PC-9 (cell line): ENCODE measurements at regions of chr3 and their contacts with region 1.

Region 1: DNA sequence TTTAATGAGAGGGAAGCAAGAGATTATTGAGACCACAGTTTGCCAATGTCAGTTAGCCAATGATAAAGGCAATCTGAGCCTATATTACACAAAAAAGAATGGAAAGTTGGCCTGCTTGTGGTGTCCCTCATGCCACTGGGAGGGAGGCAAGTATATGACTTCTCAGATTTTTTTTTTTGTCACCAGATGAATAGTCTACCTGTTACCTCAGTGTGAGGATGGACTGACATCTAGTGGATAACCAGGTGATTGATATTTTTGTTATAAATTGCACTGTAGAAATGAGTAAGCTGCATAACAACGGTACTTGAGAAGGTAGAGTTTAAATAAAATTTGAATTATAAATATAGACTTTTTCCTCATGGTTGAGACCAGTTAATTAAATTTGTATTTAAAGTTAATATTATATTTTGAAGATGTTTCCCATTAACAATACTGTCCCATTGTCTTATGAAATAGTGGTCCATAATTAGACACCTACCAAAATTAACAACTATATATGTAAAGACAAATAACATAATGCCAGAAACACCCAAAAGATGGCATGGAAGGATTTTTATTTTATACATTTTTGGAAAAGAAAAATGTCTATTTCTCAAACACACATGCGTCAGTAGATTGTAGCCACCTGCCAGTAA is 237.8 kb upstream of the GADL1 start:
- DNase-seq: peak in 1 of 2 experiments; percentile 36
- H3K4me3 ChIP-seq: no peak overlapping the region
- H3K27ac ChIP-seq: no peak overlapping the region
- H3K4me1 ChIP-seq: no peaks in the 10 kb centered on the region
- H3K27me3 ChIP-seq: no peaks in the 10 kb centered on the region
- CTCF ChIP-seq: peak; percentile 66

Region 2: DNA sequence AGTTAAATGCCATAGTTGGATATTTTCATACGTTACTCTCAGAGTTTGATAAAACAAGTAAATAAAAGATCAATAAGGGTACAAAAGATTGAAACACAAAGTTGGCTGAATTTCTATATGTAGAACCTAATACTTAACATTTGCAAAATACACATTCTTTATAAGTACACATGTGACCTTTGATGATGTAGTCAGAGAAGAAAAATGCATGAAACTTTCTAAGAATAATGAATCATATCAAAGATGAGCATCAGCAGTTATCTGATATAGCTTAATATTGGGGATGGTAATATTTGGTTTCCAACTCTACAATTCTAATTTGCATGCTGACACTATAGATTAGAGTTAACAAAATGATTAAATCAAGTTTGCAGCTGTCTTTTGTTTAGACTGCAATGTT is 713.8 kb before region 1 on chr3:
- CTCF ChIA-PET with region 1: no interaction called
- POLR2A ChIA-PET with region 1: no interaction called
- intact Hi-C with region 1: no loop called
- DNase-seq: no peak
- H3K4me3 ChIP-seq: no peak overlapping the region
- H3K27ac ChIP-seq: no peak overlapping the region
- H3K4me1 ChIP-seq: no peaks in the 10 kb centered on the region
- H3K27me3 ChIP-seq: no peaks in the 10 kb centered on the region
- CTCF ChIP-seq: no peak

Region 3: DNA sequence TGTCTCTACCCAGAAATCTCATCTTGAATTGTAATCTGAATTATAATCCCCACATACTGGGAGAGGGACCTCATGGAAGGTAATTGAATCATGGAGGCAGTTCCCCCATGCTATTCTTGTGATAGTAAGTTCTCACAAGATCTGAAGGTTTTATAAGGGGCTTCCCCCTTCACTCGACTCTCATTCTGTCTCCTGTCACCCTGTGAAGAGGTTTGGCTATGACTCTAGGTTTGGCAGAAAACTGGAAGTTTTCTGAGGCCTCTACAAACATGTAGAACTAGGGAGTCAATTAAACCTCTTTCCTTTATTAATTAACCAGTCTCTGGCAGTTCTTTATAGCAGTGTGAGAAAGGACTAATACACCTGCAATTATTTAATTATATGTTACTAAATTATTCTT is 651.0 kb before region 1 on chr3:
- CTCF ChIA-PET with region 1: no interaction called
- POLR2A ChIA-PET with region 1: no interaction called
- intact Hi-C with region 1: no loop called
- DNase-seq: no peak
- H3K4me3 ChIP-seq: no peak overlapping the region
- H3K27ac ChIP-seq: no peak overlapping the region
- H3K4me1 ChIP-seq: peaks cover 9% of the 10 kb centered on the region; the same call in 1 of the 2 replicates
- H3K27me3 ChIP-seq: no peaks in the 10 kb centered on the region
- CTCF ChIP-seq: no peak

Region 4: DNA sequence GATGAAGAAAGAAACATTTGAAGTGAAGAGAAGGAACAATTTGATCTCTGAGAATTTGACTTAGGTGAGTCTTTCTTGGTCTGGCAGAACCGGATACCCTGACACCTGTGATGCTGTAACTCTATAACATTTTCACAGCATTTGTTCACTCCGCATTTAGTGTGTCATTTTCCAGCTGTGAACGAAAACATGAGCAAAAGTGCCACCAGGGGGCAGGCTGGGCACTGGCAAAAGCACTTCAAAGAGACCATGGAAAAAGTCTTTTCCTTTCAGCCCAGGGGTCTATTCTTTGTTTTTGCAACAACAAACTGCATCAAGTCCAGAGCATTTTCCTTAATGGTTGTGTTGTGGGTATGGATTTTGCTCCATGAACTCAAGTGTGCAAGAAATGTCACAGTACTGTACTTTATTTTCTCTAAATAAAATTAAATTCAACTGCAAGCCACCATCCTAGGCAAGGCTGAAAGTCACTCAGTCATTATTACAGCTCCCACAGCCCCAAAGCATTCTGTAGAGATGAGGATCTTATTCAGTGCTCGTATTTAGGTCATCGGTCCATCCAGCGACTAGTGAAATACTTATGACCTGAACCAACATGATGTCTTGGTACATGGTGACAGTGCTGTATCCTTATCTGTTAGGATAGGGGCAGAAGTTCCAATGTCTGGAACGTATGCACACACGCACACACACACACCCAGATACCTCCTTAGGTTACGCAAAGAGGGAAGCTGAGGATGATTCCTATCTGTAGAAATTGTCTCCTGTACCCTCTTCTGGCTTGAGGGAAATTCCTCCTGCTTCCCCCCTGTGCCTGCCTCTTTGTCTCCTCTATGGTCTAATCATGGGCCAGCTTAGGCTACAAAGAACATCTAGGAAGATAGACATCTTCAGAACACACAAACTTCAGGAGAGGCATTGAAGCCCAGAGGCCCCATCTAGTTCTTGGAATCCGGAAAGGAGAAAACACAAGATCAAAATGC is 363.3 kb before region 1 on chr3:
- CTCF ChIA-PET with region 1: no interaction called
- POLR2A ChIA-PET with region 1: interaction called, 6 read pairs
- intact Hi-C with region 1: loop called (anchors 1 kb)
- DNase-seq: peak in 1 of 2 experiments; percentile 61
- H3K4me3 ChIP-seq: no peak overlapping the region
- H3K27ac ChIP-seq: no peak overlapping the region
- H3K4me1 ChIP-seq: peaks cover 6% of the 10 kb centered on the region
- H3K27me3 ChIP-seq: no peaks in the 10 kb centered on the region
- CTCF ChIP-seq: peak; percentile 73

Region 5: GRCh38 chr3:30970183-30970582 is 162.1 kb before region 1 on chr3:
- CTCF ChIA-PET with region 1: no interaction called
- POLR2A ChIA-PET with region 1: no interaction called
- intact Hi-C with region 1: loop called (anchors 2 kb)
- DNase-seq: peak in 1 of 2 experiments; percentile 1
- H3K4me3 ChIP-seq: no peak overlapping the region
- H3K27ac ChIP-seq: no peak overlapping the region
- H3K4me1 ChIP-seq: no peaks in the 10 kb centered on the region
- H3K27me3 ChIP-seq: no peaks in the 10 kb centered on the region
- CTCF ChIP-seq: no peak; the same call in 1 of the 2 replicates